ENCODE measurements at regions of chr15 and their contacts with region 1.

Region 1: DNA sequence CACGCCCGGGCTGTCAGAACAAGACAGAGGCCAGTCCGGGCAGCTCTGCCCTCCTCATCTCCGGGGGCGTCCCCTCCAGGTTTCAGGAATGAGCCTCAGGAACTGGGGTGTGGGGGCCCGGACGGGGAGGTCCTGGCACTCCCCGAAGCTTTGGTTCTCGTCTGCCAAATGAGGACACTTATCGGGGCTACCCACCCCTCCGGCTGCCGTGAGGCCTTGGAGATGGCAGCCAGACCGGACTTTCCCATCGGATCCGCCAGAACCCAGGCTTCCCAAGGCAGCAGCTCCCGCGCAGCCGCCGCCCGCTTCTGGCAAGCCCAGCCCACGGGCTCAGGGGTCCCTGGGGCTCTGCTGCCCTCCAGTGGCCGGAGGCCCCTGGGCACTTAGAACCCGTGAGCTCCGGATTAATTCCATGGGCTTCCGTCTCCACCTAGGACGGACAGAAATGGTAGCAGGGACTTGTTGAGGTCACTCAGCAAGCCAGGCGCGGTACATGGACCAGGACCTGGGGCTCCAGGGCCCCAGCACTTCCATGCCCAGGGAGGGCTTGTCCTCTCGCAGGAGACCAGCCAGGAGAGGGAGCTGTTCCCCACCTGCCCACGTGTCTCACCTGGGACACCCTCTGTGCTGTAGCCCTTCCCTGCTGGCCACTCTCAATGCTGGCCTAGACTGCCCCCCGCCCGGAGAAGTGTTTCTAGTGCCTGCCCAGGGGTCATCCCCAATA is 89.4 kb downstream of the LINGO1 start:
- DNase-seq: peak; percentile 92
- ATAC-seq: peak; percentile 91

Region 2: GRCh38 chr15:75831571-75831979 is 1711.7 kb before region 1 on chr15:
- intact Hi-C with region 1: no loop called
- DNase-seq: no peak
- ATAC-seq: no peak

Region 3: GRCh38 chr15:77014132-77015081 is 528.9 kb before region 1 on chr15:
- intact Hi-C with region 1: loop called (anchors 5 kb)
- DNase-seq: no peak
- ATAC-seq: peak; percentile 55

Region 4: DNA sequence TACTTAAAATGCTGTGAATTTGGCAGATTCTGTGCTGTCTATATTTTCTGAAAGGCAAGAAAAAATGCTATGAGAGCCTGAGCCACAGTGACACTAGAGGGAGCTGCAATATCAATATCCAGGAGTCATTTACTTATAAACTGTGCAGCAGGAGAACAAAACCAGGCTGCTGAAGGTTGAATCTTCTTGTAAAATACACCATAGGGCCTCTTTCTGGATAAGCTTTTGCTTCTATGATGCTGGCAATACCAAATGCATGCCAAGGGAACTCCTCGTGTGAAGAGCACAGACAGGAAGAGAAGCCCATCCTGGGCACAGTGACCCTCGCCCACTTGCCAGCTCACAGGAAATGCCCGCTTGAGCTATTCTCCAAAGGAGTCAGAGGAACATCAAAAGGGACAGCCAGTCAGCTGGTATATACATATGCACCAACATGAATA is 424.4 kb before region 1 on chr15:
- intact Hi-C with region 1: loop called (anchors 5 kb)
- DNase-seq: no peak
- ATAC-seq: peak; percentile 88

Region 5: DNA sequence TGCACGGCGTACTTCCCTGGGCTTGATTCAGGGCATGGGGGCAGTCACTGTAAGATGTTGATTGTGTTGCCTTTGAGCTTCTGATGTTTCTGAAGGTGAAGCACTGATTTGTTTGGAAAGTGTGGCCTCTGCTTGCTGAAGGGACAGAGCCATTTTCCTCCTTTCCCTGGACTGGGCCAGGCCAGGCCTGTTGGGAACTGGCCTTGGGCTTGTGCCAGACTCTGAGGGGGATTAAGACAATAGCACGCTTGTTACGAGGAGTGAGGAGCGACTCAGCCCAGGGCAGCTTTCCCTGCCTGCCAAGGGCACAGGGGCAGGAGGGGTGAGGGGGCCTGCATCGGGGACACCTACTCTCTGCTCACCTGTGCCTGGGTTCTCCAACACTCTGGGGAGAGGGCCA is 46.5 kb after region 1 on chr15:
- intact Hi-C with region 1: no loop called
- DNase-seq: peak; percentile 76
- ATAC-seq: peak; percentile 91

Measured in sciatic nerve (tissue), 2 donors.